Activated CD4-positive, alpha-beta T cell treated with anti-CD3 and anti-CD28 coated beads for 36 hours (primary cell): ENCODE measurements at regions of chr10 and their contacts with region 1.

Region 1: GRCh38 chr10:94545391-94546048 is at the start of gene HELLS:
- DNase-seq: peak; percentile 88
- ATAC-seq: peak; percentile 86
- H3K4me3 Mint-ChIP-seq: peak within 1 kb of the TSS; percentile 100
- H3K27ac Mint-ChIP-seq: peak within 1 kb of the TSS; percentile 99
- H3K4me1 Mint-ChIP-seq: peaks cover 11% of the 10 kb centered on the region
- H3K27me3 Mint-ChIP-seq: no peaks in the 10 kb centered on the region
- total RNA-seq, gene HELLS: 118 to 154 TPM

Region 2: DNA sequence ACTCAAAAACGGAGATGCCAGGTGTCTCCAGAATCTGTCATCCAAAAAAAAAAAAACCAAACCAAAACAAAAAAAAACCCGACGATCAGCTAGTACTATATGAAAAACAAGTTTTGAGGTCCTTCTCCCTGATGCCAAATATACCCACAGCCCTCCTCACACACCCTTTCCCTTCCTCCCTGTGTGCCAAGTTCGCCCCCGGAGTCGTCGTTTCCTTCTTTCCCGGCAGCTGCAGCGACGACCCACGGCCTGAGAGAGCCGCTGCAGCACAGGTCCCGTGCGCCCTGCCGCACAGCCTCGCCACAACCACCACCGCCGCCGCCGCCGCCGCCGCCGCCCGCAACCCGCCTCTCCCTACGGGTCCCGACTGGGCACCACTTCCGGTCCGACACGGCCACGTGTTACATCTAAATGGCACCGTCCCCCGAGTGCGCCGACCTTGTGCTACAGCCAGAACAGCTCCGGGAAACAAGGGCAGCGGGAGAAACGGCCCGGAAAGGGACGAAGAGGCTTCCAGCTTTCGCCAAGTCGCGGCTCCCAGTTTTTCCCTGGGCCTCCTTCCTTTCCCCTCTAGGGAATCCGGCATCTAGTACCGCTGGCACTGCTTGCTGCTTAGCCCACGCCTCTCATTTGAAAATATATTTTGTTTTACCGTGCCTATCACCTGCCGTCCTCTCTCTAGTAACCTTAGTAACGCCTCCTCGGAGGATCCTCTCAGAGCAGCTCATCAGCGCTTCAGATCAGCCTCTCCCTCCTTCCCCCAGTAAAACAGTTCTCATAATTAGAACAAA is 843.1 kb before region 1 on chr10 and contains the start of gene FRA10AC1:
- CTCF ChIA-PET with region 1: no interaction called
- POLR2A ChIA-PET with region 1: no interaction called
- intact Hi-C with region 1: loop called (anchors 1 to 5 kb)
- DNase-seq: peak; percentile 93
- ATAC-seq: peak; percentile 84
- H3K4me3 Mint-ChIP-seq: no peak within 1 kb of the TSS
- H3K27ac Mint-ChIP-seq: no peak within 1 kb of the TSS
- H3K4me1 Mint-ChIP-seq: peaks cover 29% of the 10 kb centered on the region
- H3K27me3 Mint-ChIP-seq: no peaks in the 10 kb centered on the region
- total RNA-seq, gene FRA10AC1: 18.9 to 29.4 TPM

Region 3: DNA sequence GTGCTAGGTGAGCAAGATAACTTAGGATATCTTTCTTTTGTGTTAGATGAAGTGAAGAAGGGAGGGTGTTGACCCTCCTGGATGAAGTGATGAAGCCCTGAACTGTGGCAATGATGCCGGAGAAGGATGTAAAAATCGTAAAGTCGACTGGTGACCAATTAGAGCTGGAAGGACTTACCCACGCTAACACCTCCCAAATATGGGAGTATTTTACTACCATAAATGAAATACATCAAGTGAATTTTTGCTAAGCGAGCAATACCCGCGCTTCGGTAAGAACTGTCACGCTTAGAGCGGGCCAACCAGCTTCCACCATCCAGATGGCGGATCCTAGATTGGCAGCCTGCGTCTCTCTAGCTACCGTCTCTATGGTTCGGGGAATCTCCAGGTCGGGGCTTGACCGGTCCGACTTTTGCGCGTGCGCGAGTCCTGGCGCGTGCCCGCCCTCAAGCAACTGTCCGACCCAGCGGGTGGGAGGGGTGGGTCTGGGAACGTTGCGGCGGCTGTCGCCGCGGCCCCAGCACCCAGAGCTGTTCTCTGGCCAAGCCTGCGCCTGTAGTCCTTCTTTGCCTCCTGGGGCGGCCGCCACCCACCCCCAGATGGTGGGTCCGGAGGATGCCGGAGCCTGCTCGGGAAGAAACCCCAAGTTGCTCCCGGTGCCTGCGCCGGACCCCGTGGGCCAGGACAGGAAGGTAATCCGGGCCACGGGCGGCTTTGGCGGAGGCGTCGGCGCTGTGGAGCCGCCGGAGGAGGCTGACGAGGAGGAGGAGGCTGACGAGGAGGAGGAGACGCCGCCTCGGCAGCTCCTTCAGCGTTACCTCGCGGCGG is 143.3 kb before region 1 on chr10 and contains the start of gene TBC1D12:
- CTCF ChIA-PET with region 1: no interaction called
- POLR2A ChIA-PET with region 1: no interaction called
- intact Hi-C with region 1: loop called in 1 of 2 experiments (anchors 2 kb)
- DNase-seq: peak; percentile 60
- ATAC-seq: peak; percentile 83
- H3K4me3 Mint-ChIP-seq: peak within 1 kb of the TSS; percentile 58
- H3K27ac Mint-ChIP-seq: no peak within 1 kb of the TSS
- H3K4me1 Mint-ChIP-seq: peaks cover 2% of the 10 kb centered on the region
- H3K27me3 Mint-ChIP-seq: peaks cover 45% of the 10 kb centered on the region
- total RNA-seq, gene TBC1D12: 0.35 to 0.39 TPM

Region 4: DNA sequence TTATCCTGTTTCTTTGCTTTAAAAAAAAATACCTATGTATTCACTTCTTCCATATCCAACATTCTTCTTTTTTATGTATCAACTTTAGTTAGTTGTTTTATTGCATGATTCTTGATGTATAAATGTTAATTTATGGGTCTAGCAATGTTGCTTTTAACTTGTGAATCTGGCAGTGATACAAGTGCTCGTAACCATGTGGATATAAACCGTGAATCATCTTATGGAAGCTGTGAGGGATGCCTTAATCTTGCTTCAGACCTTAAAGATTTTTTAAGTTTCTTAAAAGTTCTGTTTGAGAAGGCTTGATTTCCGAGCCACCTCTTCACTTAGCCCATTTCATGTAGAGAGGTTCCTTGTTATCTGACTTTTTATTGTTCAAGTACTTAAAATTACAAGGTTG is 26.0 kb after region 1 on chr10:
- CTCF ChIA-PET with region 1: no interaction called
- POLR2A ChIA-PET with region 1: no interaction called
- intact Hi-C with region 1: no loop called
- DNase-seq: no peak
- ATAC-seq: no peak
- H3K4me3 Mint-ChIP-seq: no peak overlapping the region
- H3K27ac Mint-ChIP-seq: no peak overlapping the region
- H3K4me1 Mint-ChIP-seq: peaks cover 3% of the 10 kb centered on the region
- H3K27me3 Mint-ChIP-seq: no peaks in the 10 kb centered on the region

Region 5: DNA sequence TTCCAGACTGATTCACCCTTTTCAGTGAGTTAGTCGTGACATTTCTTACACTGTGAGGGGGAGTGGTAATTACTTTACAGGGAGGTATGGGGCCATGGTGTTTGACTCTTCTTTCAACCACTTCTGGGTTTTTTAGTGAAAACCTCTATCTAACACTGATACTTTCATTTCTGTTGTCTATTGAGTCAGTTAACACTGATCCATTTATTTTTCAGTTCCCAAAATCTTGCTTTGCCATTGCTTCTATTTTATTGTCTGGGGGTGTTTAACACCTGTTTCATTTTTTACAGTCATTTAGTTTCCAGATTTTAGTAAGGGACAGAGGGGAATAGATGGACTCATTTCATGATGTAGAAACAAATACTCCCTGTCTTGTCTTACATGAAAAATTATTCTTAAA is 61.6 kb after region 1 on chr10:
- CTCF ChIA-PET with region 1: no interaction called
- POLR2A ChIA-PET with region 1: no interaction called
- intact Hi-C with region 1: loop called (anchors 5 kb)
- DNase-seq: no peak
- ATAC-seq: peak; percentile 93
- H3K4me3 Mint-ChIP-seq: no peak overlapping the region
- H3K27ac Mint-ChIP-seq: peak overlapping the region; percentile 72
- H3K4me1 Mint-ChIP-seq: peaks cover 24% of the 10 kb centered on the region
- H3K27me3 Mint-ChIP-seq: no peaks in the 10 kb centered on the region

Region 6: GRCh38 chr10:95246579-95247051 is 701.1 kb after region 1 on chr10:
- CTCF ChIA-PET with region 1: no interaction called
- POLR2A ChIA-PET with region 1: no interaction called
- intact Hi-C with region 1: no loop called
- DNase-seq: peak; percentile 83
- ATAC-seq: peak; percentile 52
- H3K4me3 Mint-ChIP-seq: no peak overlapping the region
- H3K27ac Mint-ChIP-seq: no peak overlapping the region
- H3K4me1 Mint-ChIP-seq: no peaks in the 10 kb centered on the region
- H3K27me3 Mint-ChIP-seq: peaks cover 8% of the 10 kb centered on the region